Mammary epithelial cell (primary cell): ENCODE measurements at regions of chr7 and their contacts with region 1.

Region 1: DNA sequence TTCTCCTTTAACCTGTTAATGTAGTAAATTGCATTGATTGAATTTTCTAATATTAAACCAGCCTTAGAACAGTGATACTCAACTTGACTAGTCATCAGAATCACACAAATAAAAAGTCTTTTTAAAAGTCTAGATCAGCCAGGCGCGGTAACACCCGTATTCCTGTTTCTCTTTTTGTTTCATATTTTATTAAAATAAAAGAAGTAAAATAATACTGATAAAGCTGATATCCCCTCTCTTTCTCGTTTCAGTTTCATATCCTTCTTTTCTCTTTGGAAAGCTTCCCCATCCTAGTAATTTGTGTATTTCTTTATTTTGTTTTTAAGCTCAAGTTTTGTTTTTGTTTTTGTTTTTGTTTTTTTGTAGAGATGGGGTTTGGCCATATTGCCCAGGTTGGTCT is 9.3 kb downstream of the SMO start:
- DNase-seq: no peak
- H3K4me3 ChIP-seq: no peak overlapping the region
- H3K27ac ChIP-seq: no peak overlapping the region
- H3K4me1 ChIP-seq: no peaks in the 10 kb centered on the region
- H3K27me3 ChIP-seq: no peaks in the 10 kb centered on the region
- CTCF ChIP-seq: no peak

Region 2: GRCh38 chr7:129122751-129123509 is 74.8 kb before region 1 on chr7:
- CTCF ChIA-PET with region 1: no interaction called
- dilution Hi-C with region 1: loop called (anchors 5 kb)
- in situ Hi-C with region 1: no loop called
- intact Hi-C with region 1: no loop called
- DNase-seq: peak; percentile 10
- H3K4me3 ChIP-seq: no peak overlapping the region
- H3K27ac ChIP-seq: no peak overlapping the region
- H3K4me1 ChIP-seq: no peaks in the 10 kb centered on the region
- H3K27me3 ChIP-seq: no peaks in the 10 kb centered on the region
- CTCF ChIP-seq: no peak